HEK293T (cell line): ENCODE measurements at regions of chr2 and their contacts with region 1.

Region 1: GRCh38 chr2:130736487-130736886 is 7.6 kb downstream of the GPR148 start:
- DNase-seq: no peak

Region 2: GRCh38 chr2:130749641-130750040 is 13.2 kb after region 1 on chr2:
- CTCF ChIA-PET with region 1: no interaction called
- POLR2A ChIA-PET with region 1: no interaction called
- DNase-seq: no peak

Region 3: GRCh38 chr2:130834091-130834930 is 97.8 kb after region 1 on chr2:
- CTCF ChIA-PET with region 1: interaction called, 10 read pairs
- POLR2A ChIA-PET with region 1: no interaction called
- DNase-seq: no peak